H1 (cell line): ENCODE measurements at regions of chr19 and their contacts with region 1.

Region 1: GRCh38 chr19:47790398-47790814 is 11.9 kb downstream of the SELENOW start:
- DNase-seq: peak; percentile 94 to 100
- H3K4me3 ChIP-seq: peak overlapping the region in 1 of 4 experiments; percentile 22; a peak in 1 of 8 replicates
- H3K27ac ChIP-seq: no peak overlapping the region
- H3K4me1 ChIP-seq: no peaks in the 10 kb centered on the region; a peak in 3 of 7 replicates
- H3K27me3 ChIP-seq: no peaks in the 10 kb centered on the region
- CTCF ChIP-seq: peak; percentile 94 to 97 (median 95)
- EP300 ChIP-seq: 0 out of 3 replicates have a peak, but pooled peaks of 1 of the 2 experiments have one; percentile 59
- POLR2A ChIP-seq: 0 out of 3 replicates have a peak, but pooled peaks of 1 of the 2 experiments have one; percentile 26
- RAD21 ChIP-seq: peak; percentile 58 to 74

Region 2: DNA sequence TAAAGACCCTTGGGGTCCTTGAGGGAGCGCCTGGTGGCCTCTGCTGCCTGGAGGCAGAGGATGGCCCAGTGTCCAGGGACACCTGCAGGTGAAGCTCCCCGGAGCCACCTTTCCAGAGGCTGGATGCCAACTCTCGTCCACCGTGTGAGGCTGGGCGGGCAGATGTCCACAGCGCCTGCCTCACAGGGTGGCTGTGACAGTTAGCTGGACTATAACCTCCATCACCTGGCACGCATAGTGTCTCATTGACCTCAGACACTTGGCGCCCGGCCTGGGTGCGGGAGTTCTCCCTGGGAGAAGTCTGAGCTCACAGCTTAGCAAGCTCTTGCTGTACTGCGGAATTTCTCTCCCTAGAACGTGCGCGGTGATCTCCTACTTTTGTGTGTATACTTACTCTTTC is 171.6 kb before region 1 on chr19:
- CTCF ChIA-PET with region 1: no interaction called
- POLR2A ChIA-PET with region 1: no interaction called
- DNase-seq: no peak
- H3K4me3 ChIP-seq: no peak overlapping the region
- H3K27ac ChIP-seq: peak overlapping the region; percentile 33; the same call in 1 of the 2 replicates
- H3K4me1 ChIP-seq: peaks cover 17 to 47% (median 35%) of the 10 kb centered on the region in 4 experiments
- H3K27me3 ChIP-seq: no peaks in the 10 kb centered on the region
- CTCF ChIP-seq: no peak
- EP300 ChIP-seq: no peak
- POLR2A ChIP-seq: no peak
- RAD21 ChIP-seq: no peak

Region 3: DNA sequence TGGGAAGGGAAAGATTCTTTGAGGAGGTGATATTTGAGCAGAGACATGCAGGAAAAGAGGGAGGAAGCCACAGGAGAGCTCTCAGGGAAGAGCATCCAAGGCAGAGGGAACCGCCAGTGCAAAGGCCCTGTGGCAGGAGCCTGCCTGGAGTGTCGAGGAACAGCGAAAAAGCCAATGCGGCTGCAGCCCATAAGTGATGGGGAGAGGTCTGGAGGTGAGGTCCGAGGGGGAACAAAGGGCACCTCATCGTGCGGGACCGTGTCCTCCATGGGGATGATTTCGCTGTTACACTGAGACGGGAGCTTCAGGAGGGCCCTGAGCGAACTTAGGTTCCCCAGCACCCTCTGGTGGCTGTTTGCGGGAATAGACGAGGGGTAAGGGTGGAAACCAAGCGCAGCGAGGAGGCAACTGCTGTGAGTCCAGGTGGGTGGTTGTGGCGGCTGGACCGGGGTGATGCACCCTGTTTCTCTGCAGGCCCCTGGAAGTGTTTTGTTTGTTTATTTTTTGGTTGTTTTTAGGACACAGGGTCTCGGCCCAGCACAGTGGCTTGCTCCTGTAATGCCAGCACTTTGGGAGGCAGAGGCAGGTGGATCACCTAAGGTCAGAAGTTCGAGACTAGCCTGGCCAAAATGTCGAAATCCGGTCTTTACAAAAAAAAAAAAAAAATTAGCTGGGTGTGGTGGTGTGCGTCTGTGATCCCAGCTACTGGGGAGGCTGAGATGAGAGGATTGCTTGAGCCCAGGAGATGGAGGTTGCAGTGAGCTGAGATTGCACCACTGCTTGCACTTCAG is 83.1 kb before region 1 on chr19:
- CTCF ChIA-PET with region 1: interaction called, 72 read pairs
- POLR2A ChIA-PET with region 1: no interaction called
- DNase-seq: peak in 1 of 2 experiments; percentile 94
- H3K4me3 ChIP-seq: no peak overlapping the region
- H3K27ac ChIP-seq: no peak overlapping the region
- H3K4me1 ChIP-seq: no peaks in the 10 kb centered on the region
- H3K27me3 ChIP-seq: no peaks in the 10 kb centered on the region
- CTCF ChIP-seq: peak; percentile 91 to 93 (median 92)
- EP300 ChIP-seq: peak in 1 of 2 experiments; percentile 40; a peak in 1 of 3 replicates
- POLR2A ChIP-seq: no peak
- RAD21 ChIP-seq: peak; percentile 90 to 91

Region 4: GRCh38 chr19:47756953-47757608 is 33.3 kb before region 1 on chr19:
- CTCF ChIA-PET with region 1: interaction called, 6 read pairs
- POLR2A ChIA-PET with region 1: interaction called, 23 read pairs
- DNase-seq: no peak
- H3K4me3 ChIP-seq: no peak overlapping the region
- H3K27ac ChIP-seq: no peak overlapping the region
- H3K4me1 ChIP-seq: no peaks in the 10 kb centered on the region
- H3K27me3 ChIP-seq: no peaks in the 10 kb centered on the region
- CTCF ChIP-seq: no peak
- EP300 ChIP-seq: no peak
- POLR2A ChIP-seq: peak in 1 of 2 experiments; percentile 37; a peak in 2 of 3 replicates
- RAD21 ChIP-seq: no peak

Region 5: DNA sequence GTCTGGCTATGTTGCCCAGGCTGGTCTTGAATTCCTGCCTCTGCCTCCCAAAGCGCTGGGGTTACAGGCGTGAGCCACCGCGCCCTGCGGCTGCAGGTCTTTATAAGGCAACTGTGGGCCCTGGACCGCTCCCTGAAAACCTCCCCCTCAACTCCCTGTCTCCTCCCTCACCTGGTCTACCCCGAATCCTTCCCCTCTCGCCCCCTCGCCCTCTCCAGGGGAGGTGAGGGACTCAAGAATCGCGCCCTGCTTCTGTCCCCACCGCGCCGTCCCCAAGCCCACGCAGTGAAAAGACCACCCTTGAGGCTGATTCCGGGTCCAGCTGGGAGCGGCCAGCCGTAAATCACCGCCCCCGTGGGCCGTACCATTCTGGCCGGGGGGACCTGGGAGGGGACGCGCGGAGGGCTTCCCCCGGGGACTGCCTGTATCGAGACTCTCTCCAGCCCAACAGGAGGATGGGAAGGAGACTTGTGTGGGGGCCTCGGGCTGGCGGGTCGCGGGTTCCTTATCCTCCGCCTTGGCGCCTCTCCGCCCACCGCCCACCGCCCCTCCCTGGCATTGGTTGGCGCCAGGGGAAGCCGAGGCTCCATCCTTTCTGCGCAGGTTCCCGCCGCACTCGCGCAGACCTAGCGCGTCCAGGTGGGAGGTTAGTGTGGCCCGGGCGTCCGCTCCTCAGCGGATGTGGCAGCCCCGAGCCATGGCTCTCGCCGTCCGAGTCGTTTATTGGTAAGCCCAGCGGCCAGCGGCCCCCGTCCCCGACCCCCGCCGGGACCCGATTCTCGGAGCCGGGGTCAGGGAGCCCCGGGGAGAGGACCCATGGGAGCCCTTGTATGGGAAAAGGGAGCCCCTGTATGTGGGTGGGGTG is 12.1 kb before region 1 on chr19 and contains the start of gene SELENOW:
- CTCF ChIA-PET with region 1: interaction called, 7 read pairs
- POLR2A ChIA-PET with region 1: interaction called, 27 read pairs
- DNase-seq: peak; percentile 46 to 95
- H3K4me3 ChIP-seq: peak within 1 kb of the TSS; percentile 57 to 97 (median 75)
- H3K27ac ChIP-seq: peak within 1 kb of the TSS; percentile 99
- H3K4me1 ChIP-seq: peaks cover 0 to 10% (median 7%) of the 10 kb centered on the region in 4 experiments; a peak in 5 of 7 replicates
- H3K27me3 ChIP-seq: no peaks in the 10 kb centered on the region
- CTCF ChIP-seq: no peak
- EP300 ChIP-seq: peak in 1 of 2 experiments; percentile 99; a peak in 2 of 3 replicates
- POLR2A ChIP-seq: peak; percentile 87 to 90
- RAD21 ChIP-seq: no peak
- total RNA-seq, gene SELENOW: 361 and 371 TPM in 2 replicates

Region 6: GRCh38 chr19:47819858-47820257 is 29.5 kb after region 1 on chr19:
- CTCF ChIA-PET with region 1: interaction called, 10 read pairs
- POLR2A ChIA-PET with region 1: no interaction called
- DNase-seq: peak in 1 of 2 experiments; percentile 17
- H3K4me3 ChIP-seq: peak overlapping the region in 2 of 4 experiments; percentile 14 to 17; a peak in 1 of 8 replicates
- H3K27ac ChIP-seq: no peak overlapping the region
- H3K4me1 ChIP-seq: peaks cover 0 to 19% (median 11%) of the 10 kb centered on the region in 4 experiments; a peak in 6 of 7 replicates
- H3K27me3 ChIP-seq: no peaks in the 10 kb centered on the region
- CTCF ChIP-seq: no peak
- EP300 ChIP-seq: 0 out of 3 replicates have a peak, but pooled peaks of 1 of the 2 experiments have one; percentile 33
- POLR2A ChIP-seq: no peak
- RAD21 ChIP-seq: no peak